Heart right ventricle (tissue), 16 donors: ENCODE measurements at regions of chr15 and their contacts with region 1.

Region 1: DNA sequence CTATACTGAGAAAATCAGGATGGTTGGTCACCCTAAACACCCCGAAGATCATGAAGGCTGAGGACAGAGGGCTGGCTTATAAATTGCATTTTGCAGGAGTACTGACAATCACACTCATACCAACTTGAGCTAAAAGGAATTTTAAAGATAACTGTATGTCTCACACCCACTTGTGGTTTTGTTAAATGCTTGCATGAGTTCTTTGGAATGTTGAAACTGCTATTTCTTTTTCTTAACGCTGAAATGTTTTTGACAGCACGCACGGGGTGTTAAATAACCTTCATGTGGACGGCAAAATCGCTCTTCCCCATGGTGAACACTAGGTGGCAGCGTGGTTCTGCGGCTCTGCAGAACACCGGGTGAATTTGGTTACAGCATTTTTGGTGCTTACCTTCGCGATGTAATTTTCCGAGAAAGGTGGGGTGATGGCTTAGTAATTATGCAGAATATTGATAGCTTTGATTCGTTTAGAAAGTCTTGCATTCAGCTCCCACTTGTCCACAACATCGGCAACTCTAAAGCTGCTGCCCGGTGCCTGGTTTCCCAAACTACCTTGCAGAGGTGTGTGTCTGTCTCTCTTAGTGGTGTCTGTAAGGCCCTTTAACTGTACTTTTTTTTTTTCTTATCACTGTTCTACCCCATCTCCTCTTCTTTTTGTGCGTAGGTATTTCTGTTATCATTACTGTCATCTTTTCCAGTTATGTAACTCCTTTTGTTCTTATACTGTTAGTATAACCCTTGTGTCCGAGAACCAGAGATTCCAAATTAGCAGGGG is 51.7 kb downstream of the ARNT2 start:
- DNase-seq: peak; percentile 33 to 50
- ATAC-seq: peak; percentile 70 to 79 (median 72)
- H3K4me3 ChIP-seq: no peak overlapping the region
- H3K27ac ChIP-seq: no peak overlapping the region
- H3K4me1 ChIP-seq: peaks cover 0 to 10% (median 0%) of the 10 kb centered on the region in 9 donors
- H3K27me3 ChIP-seq: peaks cover 0 to 80% (median 0%) of the 10 kb centered on the region in 7 donors
- CTCF ChIP-seq: peak; percentile 89 to 96 (median 93)

Region 2: GRCh38 chr15:80507712-80508316 is 52.0 kb after region 1 on chr15:
- intact Hi-C with region 1: loop called in 2 of 10 experiments (anchors 5 to 10 kb)
- DNase-seq: no peak
- ATAC-seq: peak in 5 of 8 donors; percentile 29 to 62 (median 54)
- H3K4me3 ChIP-seq: no peak overlapping the region
- H3K27ac ChIP-seq: no peak overlapping the region
- H3K4me1 ChIP-seq: peaks cover 0 to 20% (median 6%) of the 10 kb centered on the region in 9 donors
- H3K27me3 ChIP-seq: no peaks in the 10 kb centered on the region
- CTCF ChIP-seq: no peak

Region 3: DNA sequence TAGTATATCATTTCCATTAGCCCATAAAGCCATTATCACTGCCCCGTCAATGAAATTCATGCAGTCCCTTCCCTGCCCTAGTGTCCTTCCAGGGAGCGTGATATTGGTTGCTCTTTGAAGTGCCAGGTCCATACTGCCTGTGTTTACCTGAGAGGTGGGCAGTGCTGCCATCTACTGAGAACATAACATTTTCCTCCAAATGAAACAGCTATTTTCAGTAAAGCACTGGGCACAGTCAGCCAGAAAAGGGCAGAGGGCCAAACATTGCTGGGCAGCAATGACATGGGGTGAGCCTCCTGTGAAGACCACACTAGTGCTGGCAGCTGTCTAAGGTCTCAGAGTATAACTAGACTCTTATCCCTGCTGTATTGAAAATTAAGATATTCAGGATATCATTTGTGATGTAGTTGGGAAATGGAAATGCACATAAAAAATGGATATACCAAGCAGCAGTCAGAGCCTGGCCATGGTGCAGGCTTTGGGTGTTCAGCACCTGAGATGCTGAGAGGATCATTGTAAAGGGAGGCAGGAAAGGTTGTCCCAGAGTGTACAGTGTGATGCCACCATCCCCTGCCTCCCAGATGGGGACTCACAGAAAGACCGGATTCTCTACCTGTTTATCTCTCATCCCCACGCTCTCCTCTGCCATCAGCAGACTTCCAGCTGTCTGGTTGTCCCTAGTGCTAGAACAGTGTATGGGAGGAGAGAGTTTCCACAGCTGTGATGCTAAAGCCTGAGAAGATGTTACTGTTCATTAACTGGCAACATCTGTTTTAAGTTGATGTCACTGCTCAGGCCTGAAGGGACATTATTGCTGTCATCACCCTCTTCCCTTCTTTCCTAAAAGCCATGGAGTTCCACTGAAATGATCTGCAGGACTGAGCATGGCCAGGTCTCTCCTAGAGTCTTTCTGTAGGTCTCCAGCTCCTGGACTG is 57.1 kb after region 1 on chr15:
- intact Hi-C with region 1: loop called in 2 of 10 experiments (anchors 5 to 10 kb)
- DNase-seq: peak in 1 of 2 donors; percentile 24
- ATAC-seq: peak; percentile 23 to 80 (median 65)
- H3K4me3 ChIP-seq: no peak overlapping the region
- H3K27ac ChIP-seq: no peak overlapping the region
- H3K4me1 ChIP-seq: peaks cover 0 to 24% (median 5%) of the 10 kb centered on the region in 9 donors
- H3K27me3 ChIP-seq: no peaks in the 10 kb centered on the region
- CTCF ChIP-seq: peak in 5 of 9 donors; percentile 20 to 35 (median 31)

Region 4: GRCh38 chr15:80567721-80568157 is 111.9 kb after region 1 on chr15:
- intact Hi-C with region 1: loop called in 7 of 10 experiments (anchors 5 to 10 kb)
- DNase-seq: peak in 1 of 2 donors; percentile 64
- ATAC-seq: peak; percentile 63 to 88 (median 83)
- H3K4me3 ChIP-seq: no peak overlapping the region
- H3K27ac ChIP-seq: no peak overlapping the region
- H3K4me1 ChIP-seq: peaks cover 0 to 8% (median 0%) of the 10 kb centered on the region in 9 donors
- H3K27me3 ChIP-seq: peaks cover 0 to 9% (median 0%) of the 10 kb centered on the region in 7 donors
- CTCF ChIP-seq: peak; percentile 41 to 80 (median 71)

Region 5: GRCh38 chr15:80776420-80777045 is 320.7 kb after region 1 on chr15:
- intact Hi-C with region 1: loop called (anchors 1 to 5 kb)
- DNase-seq: peak; percentile 27 to 77
- ATAC-seq: peak; percentile 37 to 63 (median 54)
- H3K4me3 ChIP-seq: no peak overlapping the region
- H3K27ac ChIP-seq: peak overlapping the region in 4 of 10 donors; percentile 17 to 61 (median 28)
- H3K4me1 ChIP-seq: peaks cover 14 to 53% (median 38%) of the 10 kb centered on the region in 9 donors
- H3K27me3 ChIP-seq: peaks cover 0 to 44% (median 37%) of the 10 kb centered on the region in 7 donors
- CTCF ChIP-seq: peak; percentile 79 to 90 (median 87)

Region 6: DNA sequence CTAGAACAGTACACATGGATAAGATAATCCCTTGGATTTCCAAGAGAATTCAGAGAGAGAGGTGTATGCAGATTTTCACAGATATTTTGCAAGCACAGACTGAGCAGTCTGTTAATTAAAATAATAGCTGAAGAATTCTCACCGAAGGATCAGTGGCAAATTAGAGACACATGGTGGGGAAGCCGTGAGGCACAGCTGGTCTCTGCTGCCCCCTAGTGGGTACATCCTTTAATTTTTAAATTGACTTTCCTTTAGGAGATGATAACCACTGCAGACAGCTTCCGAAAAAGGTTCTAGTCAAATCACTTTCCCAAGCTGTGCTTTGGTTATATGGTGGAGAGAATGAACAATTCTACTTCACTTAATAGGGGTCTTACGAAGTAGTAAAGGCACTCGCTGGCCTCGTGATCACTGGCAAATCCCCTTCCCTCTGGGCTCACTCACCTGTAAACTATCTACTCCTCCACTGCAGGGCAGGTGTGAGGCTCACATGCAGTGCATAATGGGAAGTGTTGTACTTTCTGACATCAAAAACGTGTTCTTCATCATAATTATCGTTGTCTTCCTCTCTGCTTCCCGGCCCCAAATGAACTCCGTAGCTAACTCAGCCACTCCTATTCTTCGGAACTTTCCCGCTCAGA is 514.3 kb after region 1 on chr15:
- intact Hi-C with region 1: loop called in 9 of 10 experiments (anchors 1 to 5 kb)
- DNase-seq: peak; percentile 33 to 69
- ATAC-seq: peak in 7 of 8 donors; percentile 46 to 83 (median 74)
- H3K4me3 ChIP-seq: no peak overlapping the region
- H3K27ac ChIP-seq: no peak overlapping the region
- H3K4me1 ChIP-seq: peaks cover 0 to 15% (median 0%) of the 10 kb centered on the region in 9 donors
- H3K27me3 ChIP-seq: no peaks in the 10 kb centered on the region
- CTCF ChIP-seq: peak; percentile 76 to 97 (median 91)

Region 7: GRCh38 chr15:81265944-81266775 is 810.3 kb after region 1 on chr15:
- intact Hi-C with region 1: loop called in 1 of 10 experiments (anchors 10 kb)
- DNase-seq: peak; percentile 80 to 81
- ATAC-seq: peak; percentile 87 to 96 (median 94)
- H3K4me3 ChIP-seq: peak overlapping the region in 2 of 10 donors; percentile 27 to 29
- H3K27ac ChIP-seq: no peak overlapping the region
- H3K4me1 ChIP-seq: peaks cover 0 to 30% (median 15%) of the 10 kb centered on the region in 9 donors
- H3K27me3 ChIP-seq: peaks cover 0 to 6% (median 0%) of the 10 kb centered on the region in 7 donors
- CTCF ChIP-seq: peak; percentile 81 to 93 (median 86)